Caco-2 (cell line): ENCODE measurements at regions of chr17 and their contacts with region 1.

Region 1: GRCh38 chr17:66673668-66674315 is 161.1 kb upstream of the CACNG5 start:
- DNase-seq: peak; percentile 54 to 72
- H3K4me3 ChIP-seq: no peak overlapping the region
- H3K4me3 Mint-ChIP-seq: no peak overlapping the region
- H3K27ac Mint-ChIP-seq: peak overlapping the region; percentile 14
- H3K4me1 ChIP-seq: peaks cover 13% of the 10 kb centered on the region
- H3K4me1 Mint-ChIP-seq: peaks cover 19% of the 10 kb centered on the region
- H3K27me3 ChIP-seq: no peaks in the 10 kb centered on the region
- H3K27me3 Mint-ChIP-seq: no peaks in the 10 kb centered on the region
- CTCF ChIP-seq: peak; percentile 66 to 81

Region 2: GRCh38 chr17:66200685-66201092 is 473.1 kb before region 1 on chr17:
- CTCF ChIA-PET with region 1: interaction called, 4 read pairs
- POLR2A ChIA-PET with region 1: no interaction called
- intact Hi-C with region 1: loop called (anchors 1 kb)
- DNase-seq: peak; percentile 77 to 79
- H3K4me3 ChIP-seq: no peak overlapping the region
- H3K4me3 Mint-ChIP-seq: no peak overlapping the region
- H3K27ac Mint-ChIP-seq: peak overlapping the region; percentile 27
- H3K4me1 ChIP-seq: peaks cover 5% of the 10 kb centered on the region
- H3K4me1 Mint-ChIP-seq: peaks cover 7% of the 10 kb centered on the region
- H3K27me3 ChIP-seq: no peaks in the 10 kb centered on the region
- H3K27me3 Mint-ChIP-seq: no peaks in the 10 kb centered on the region
- CTCF ChIP-seq: peak; percentile 80 to 83

Region 3: GRCh38 chr17:66290101-66290722 is 383.6 kb before region 1 on chr17:
- CTCF ChIA-PET with region 1: interaction called, 3 read pairs
- POLR2A ChIA-PET with region 1: no interaction called
- intact Hi-C with region 1: loop called (anchors 5 kb)
- DNase-seq: peak in 1 of 2 experiments; percentile 36
- H3K4me3 ChIP-seq: no peak overlapping the region
- H3K4me3 Mint-ChIP-seq: no peak overlapping the region
- H3K27ac Mint-ChIP-seq: no peak overlapping the region
- H3K4me1 ChIP-seq: 0 out of 2 replicates have a peak, but pooled peaks cover 5% of the 10 kb centered on the region
- H3K4me1 Mint-ChIP-seq: no peaks in the 10 kb centered on the region
- H3K27me3 ChIP-seq: no peaks in the 10 kb centered on the region
- H3K27me3 Mint-ChIP-seq: no peaks in the 10 kb centered on the region
- CTCF ChIP-seq: peak in 1 of 2 experiments; percentile 20

Region 4: GRCh38 chr17:66614469-66614868 is 59.3 kb before region 1 on chr17:
- CTCF ChIA-PET with region 1: no interaction called
- POLR2A ChIA-PET with region 1: no interaction called
- intact Hi-C with region 1: no loop called
- DNase-seq: no peak
- H3K4me3 ChIP-seq: no peak overlapping the region
- H3K4me3 Mint-ChIP-seq: no peak overlapping the region
- H3K27ac Mint-ChIP-seq: no peak overlapping the region
- H3K4me1 ChIP-seq: peaks cover 21% of the 10 kb centered on the region
- H3K4me1 Mint-ChIP-seq: peaks cover 13% of the 10 kb centered on the region
- H3K27me3 ChIP-seq: no peaks in the 10 kb centered on the region
- H3K27me3 Mint-ChIP-seq: no peaks in the 10 kb centered on the region
- CTCF ChIP-seq: no peak

Region 5: GRCh38 chr17:66850692-66851091 is 176.9 kb after region 1 on chr17:
- CTCF ChIA-PET with region 1: no interaction called
- POLR2A ChIA-PET with region 1: no interaction called
- intact Hi-C with region 1: no loop called
- DNase-seq: no peak
- H3K4me3 ChIP-seq: no peak overlapping the region
- H3K4me3 Mint-ChIP-seq: no peak overlapping the region
- H3K27ac Mint-ChIP-seq: no peak overlapping the region
- H3K4me1 ChIP-seq: no peaks in the 10 kb centered on the region
- H3K4me1 Mint-ChIP-seq: no peaks in the 10 kb centered on the region
- H3K27me3 ChIP-seq: no peaks in the 10 kb centered on the region
- H3K27me3 Mint-ChIP-seq: peaks cover 3% of the 10 kb centered on the region
- CTCF ChIP-seq: no peak